Cardiac septum (tissue), 1 donor: ENCODE measurements at regions of chr15 and their contacts with region 1.

Region 1: GRCh38 chr15:55993111-55993803 is at the start of gene NEDD4:
- DNase-seq: peak; percentile 94
- total RNA-seq, gene NEDD4: 10.5 TPM

Region 2: DNA sequence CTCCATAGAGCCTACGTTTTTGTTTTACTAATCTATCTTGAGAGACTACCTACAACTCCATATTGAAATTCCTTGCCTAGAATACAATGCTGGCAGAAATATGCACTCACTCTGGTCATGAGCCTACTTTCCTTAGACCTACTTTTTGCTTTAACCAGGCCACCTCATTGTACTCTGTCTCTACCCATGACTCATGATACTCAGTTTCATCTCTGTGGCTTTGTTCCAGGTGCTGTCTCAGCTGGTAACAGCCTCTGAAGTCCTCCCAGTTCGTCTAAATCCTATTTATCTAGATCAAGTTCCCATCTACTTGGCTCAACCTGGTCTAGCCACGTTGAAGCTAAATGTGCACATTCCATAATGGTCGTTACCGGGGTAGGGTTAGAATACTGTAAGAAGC is 1332.9 kb before region 1 on chr15:
- intact Hi-C with region 1: no loop called
- DNase-seq: no peak

Region 3: GRCh38 chr15:55897560-55898336 is 95.5 kb before region 1 on chr15:
- intact Hi-C with region 1: loop called (anchors 5 kb)
- DNase-seq: no peak

Region 4: DNA sequence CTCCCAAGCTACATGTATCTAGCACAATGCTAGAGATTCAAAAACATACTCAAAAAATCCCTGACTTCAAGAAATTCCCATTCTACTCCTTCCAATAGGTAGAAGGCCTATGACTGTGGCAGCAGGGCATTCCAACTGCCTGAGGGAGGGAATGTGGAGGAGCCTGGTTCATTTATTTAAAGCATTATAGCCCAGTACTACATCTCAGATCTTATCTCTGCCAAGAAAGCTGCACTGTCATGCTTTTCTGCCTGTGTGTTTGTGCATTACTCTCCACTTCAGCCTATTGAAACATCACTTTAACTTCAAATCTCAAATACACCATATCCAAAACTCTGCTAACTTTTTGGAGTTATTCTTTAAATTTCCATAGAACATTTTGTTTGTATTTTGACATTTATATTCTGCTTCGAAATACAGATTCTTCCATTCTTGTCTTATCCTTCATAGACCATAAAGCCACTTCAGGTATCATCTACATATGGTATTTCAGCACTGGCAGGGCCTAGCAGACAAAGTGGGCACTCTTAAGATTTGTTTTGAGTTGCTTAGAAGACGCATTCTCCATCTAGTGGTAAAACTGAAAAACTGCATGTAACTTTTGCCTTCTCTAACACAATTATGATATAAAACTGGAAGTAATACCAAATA is 59.3 kb after region 1 on chr15:
- intact Hi-C with region 1: loop called (anchors 5 kb)
- DNase-seq: no peak